Posterior vena cava (tissue), 2 donors: ENCODE measurements at regions of chr1 and their contacts with region 1.

Region 1: GRCh38 chr1:205500240-205501233 is 3.9 kb upstream of the CDK18 start:
- DNase-seq: no peak

Region 2: GRCh38 chr1:205472737-205473441 is 27.6 kb before region 1 on chr1:
- intact Hi-C with region 1: loop called in 1 of 2 experiments (anchors 1 kb)
- DNase-seq: no peak